ENCODE measurements at regions of chr9 and their contacts with region 1.

Region 1: GRCh38 chr9:127187231-127187956 is 65.0 kb upstream of the ANGPTL2 start:
- DNase-seq: peak in 1 of 2 donors; percentile 92
- H3K4me3 ChIP-seq: no peak overlapping the region
- H3K27ac ChIP-seq: peak overlapping the region; percentile 90 to 91
- H3K4me1 ChIP-seq: peaks cover 14 to 41% of the 10 kb centered on the region in 2 donors
- H3K27me3 ChIP-seq: no peaks in the 10 kb centered on the region
- CTCF ChIP-seq: peak in 1 of 3 experiments; percentile 9

Region 2: GRCh38 chr9:127021664-127022363 is 165.6 kb before region 1 on chr9:
- intact Hi-C with region 1: loop called (anchors 5 kb)
- DNase-seq: peak; percentile 69 to 93
- H3K4me3 ChIP-seq: no peak overlapping the region
- H3K27ac ChIP-seq: peak overlapping the region; percentile 69 to 73
- H3K4me1 ChIP-seq: peaks cover 3 to 13% of the 10 kb centered on the region in 2 donors
- H3K27me3 ChIP-seq: no peaks in the 10 kb centered on the region
- CTCF ChIP-seq: no peak

Region 3: GRCh38 chr9:127154390-127155191 is 32.8 kb before region 1 on chr9:
- intact Hi-C with region 1: loop called (anchors 1 kb)
- DNase-seq: peak in 1 of 2 donors; percentile 91
- H3K4me3 ChIP-seq: peak overlapping the region in 1 of 2 donors; percentile 46
- H3K27ac ChIP-seq: peak overlapping the region; percentile 57 to 59
- H3K4me1 ChIP-seq: peaks cover 4 to 8% of the 10 kb centered on the region in 2 donors
- H3K27me3 ChIP-seq: no peaks in the 10 kb centered on the region
- CTCF ChIP-seq: peak in 1 of 3 experiments; percentile 24

Region 4: DNA sequence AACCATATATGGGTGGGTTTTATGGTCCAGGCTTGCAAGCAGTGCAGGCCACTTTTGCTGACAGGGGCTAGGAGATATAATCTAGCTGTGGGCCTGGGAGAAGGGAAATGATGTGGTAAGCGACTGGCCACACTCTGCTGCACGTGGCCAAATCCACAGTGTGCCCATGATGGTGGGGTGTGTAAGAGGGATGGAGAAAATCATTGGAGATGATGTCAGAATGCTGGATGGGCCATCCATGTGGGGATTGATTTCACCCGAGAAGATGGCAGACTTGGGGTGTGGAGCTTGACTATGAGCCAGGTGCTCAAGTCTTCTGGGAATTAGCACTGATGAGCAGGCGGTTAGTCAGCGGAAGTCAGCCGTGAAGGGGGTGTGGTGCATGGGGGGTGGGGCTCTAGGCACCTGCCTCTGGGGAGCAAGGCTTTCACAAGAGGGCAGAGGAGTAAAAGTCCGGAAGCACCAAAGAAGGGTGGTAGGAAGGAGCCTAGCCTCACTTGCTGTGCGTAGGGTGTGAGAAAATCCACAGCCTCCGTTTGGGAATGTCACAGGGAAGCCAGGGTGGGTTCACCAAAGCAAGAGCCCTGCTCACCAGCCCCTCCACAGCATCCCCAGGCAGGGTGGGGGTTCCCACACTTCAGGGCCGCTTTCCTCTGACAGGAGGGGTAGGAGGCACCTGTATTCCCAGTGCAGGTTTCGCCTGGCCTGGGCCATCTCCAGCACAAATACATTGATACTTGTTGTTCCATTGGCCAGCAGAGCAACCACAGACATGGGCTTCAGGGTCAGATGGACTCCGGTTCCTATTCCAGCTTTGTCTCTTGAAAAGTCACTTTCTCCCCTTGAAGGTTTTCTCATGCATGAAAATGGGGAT is 20.5 kb before region 1 on chr9:
- intact Hi-C with region 1: no loop called
- DNase-seq: no peak
- H3K4me3 ChIP-seq: no peak overlapping the region
- H3K27ac ChIP-seq: no peak overlapping the region
- H3K4me1 ChIP-seq: peaks cover 0 to 5% of the 10 kb centered on the region in 2 donors
- H3K27me3 ChIP-seq: no peaks in the 10 kb centered on the region
- CTCF ChIP-seq: no peak

Region 5: GRCh38 chr9:127263664-127264063 is 76.3 kb after region 1 on chr9:
- intact Hi-C with region 1: no loop called
- DNase-seq: no peak
- H3K4me3 ChIP-seq: no peak overlapping the region
- H3K27ac ChIP-seq: peak overlapping the region; percentile 56 to 58
- H3K4me1 ChIP-seq: peaks cover 10 to 38% of the 10 kb centered on the region in 2 donors
- H3K27me3 ChIP-seq: no peaks in the 10 kb centered on the region
- CTCF ChIP-seq: no peak

Region 6: GRCh38 chr9:127847155-127847463 is 659.7 kb after region 1 on chr9:
- intact Hi-C with region 1: loop called (anchors 5 kb)
- DNase-seq: peak in 1 of 2 donors; percentile 82
- H3K4me3 ChIP-seq: peak overlapping the region in 1 of 2 donors; percentile 4
- H3K27ac ChIP-seq: peak overlapping the region; percentile 96 to 98
- H3K4me1 ChIP-seq: peaks cover 13 to 53% of the 10 kb centered on the region in 2 donors
- H3K27me3 ChIP-seq: no peaks in the 10 kb centered on the region
- CTCF ChIP-seq: no peak